Activated CD4-positive, alpha-beta memory T cell treated with anti-CD3 and anti-CD28 coated beads, Interleukin-2, amount 10 ng/mL, durations not matched to agents 7 days and 5 days (primary cell): ENCODE measurements at regions of chr2 and their contacts with region 1.

Region 1: GRCh38 chr2:226835796-226836547 is at the start of gene RHBDD1:
- DNase-seq: peak; percentile 96
- H3K4me3 Mint-ChIP-seq: peak within 1 kb of the TSS; percentile 97
- H3K27ac Mint-ChIP-seq: peak within 1 kb of the TSS; percentile 100
- H3K4me1 Mint-ChIP-seq: peaks cover 60% of the 10 kb centered on the region
- H3K27me3 Mint-ChIP-seq: no peaks in the 10 kb centered on the region
- total RNA-seq, gene RHBDD1: 38.1 to 43.0 TPM

Region 2: DNA sequence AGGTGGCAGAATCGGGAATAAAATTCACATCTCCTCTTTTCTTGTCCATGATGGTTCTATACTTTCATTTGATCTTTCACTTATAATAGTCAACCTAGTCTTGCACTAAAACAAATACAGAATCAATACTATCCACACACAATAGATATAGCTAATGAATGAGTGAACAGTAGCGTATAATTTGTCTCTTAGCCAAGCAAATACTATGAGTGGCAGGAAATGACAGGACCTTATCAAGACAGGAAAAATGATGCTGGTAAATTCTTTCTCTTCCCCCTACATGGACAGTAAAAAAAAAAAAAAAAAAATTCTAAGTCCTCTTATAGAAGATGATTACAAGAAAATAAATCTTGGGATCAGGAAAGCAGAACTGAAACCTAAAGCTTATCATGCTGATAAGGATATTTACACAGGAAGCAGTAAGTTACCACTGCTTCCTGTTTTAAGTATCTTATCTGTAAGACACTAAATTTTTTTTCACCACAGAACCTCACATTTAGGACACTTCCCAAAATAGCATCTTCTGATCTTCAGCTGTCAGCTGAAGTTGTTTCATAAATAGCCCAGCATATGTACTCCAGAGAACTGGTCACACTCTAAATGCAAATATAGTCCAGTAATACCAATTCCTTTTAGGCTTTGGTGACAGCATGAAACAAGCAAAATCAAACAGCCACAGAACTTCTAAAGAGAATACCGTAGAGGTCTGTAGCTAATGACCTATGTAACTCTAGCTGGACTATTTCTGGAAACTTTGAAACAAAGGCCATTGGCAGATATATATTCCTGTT is 63.4 kb before region 1 on chr2:
- CTCF ChIA-PET with region 1: no interaction called
- POLR2A ChIA-PET with region 1: interaction called, 16 read pairs
- DNase-seq: no peak
- H3K4me3 Mint-ChIP-seq: peak overlapping the region; percentile 45
- H3K27ac Mint-ChIP-seq: peak overlapping the region; percentile 69
- H3K4me1 Mint-ChIP-seq: peaks cover 30% of the 10 kb centered on the region
- H3K27me3 Mint-ChIP-seq: no peaks in the 10 kb centered on the region